ENCODE measurements at regions of chr14 and their contacts with region 1.

Region 1: DNA sequence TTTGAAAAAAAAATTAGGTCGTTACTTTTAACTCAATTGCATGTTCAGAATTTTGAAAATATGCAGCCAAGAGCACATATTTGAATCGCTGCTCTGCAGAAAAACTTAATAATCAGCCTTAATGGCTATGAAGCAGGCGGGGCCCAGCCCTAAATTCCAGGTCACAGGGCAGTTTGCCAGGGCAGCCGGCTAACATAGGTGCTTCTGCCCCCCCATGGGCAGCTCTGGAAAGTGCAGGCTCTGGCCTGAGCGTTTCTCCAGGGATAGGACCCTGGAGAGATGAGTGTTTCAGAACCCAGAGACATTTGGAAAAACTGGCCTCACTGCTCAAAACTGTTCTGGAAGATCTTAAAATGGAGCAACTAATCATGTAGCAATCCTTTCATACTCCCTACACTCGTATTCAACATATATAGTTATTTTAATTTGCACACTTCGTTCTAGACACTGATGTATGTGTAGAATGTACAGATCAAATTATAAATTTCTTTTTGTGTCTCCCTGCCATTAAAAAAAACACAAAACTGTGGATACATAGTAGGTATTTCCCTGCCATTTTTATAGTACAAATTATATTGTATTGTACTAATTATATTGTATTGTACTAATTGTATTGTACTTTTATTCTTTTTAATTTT is 26.0 kb upstream of the PTGR2 start:
- DNase-seq: peak in 1 of 2 donors; percentile 92
- H3K4me3 ChIP-seq: no peak overlapping the region
- H3K27ac ChIP-seq: no peak overlapping the region
- H3K4me1 ChIP-seq: peaks cover 7% of the 10 kb centered on the region
- H3K27me3 ChIP-seq: no peaks in the 10 kb centered on the region
- CTCF ChIP-seq: peak; percentile 60 to 91 (median 67)
- POLR2A ChIP-seq: no peak

Region 2: GRCh38 chr14:73728717-73729330 is 96.8 kb before region 1 on chr14:
- intact Hi-C with region 1: loop called (anchors 5 kb)
- DNase-seq: no peak
- H3K4me3 ChIP-seq: no peak overlapping the region
- H3K27ac ChIP-seq: peak overlapping the region; percentile 69
- H3K4me1 ChIP-seq: peaks cover 46% of the 10 kb centered on the region
- H3K27me3 ChIP-seq: no peaks in the 10 kb centered on the region
- CTCF ChIP-seq: peak; percentile 93 to 95 (median 94)
- POLR2A ChIP-seq: no peak

Measured in vagina (tissue), 2 donors.